ENCODE measurements at regions of chr3 and their contacts with region 1.

Region 1: DNA sequence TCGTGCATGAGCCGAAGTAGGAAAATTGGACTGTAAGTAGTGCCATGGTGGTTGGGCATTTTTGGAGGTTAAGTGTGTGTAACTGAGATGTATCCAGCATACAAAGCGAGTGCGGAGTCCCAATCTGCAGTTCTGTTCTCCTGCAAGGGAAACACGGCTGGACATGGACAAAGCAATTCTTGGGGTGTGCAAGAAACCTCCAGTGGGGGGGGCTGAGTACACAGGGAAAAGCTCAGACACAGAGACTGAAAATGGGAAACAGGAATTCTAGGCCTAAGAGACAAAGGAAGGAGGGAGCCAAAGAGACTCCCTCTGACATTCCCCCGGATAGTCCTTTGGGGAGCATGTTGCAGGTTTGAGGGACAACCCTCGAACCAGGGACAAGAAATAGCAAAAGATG is 83.2 kb upstream of the PLSCR4 start:
- DNase-seq: no peak
- H3K4me3 ChIP-seq: no peak overlapping the region
- H3K27ac ChIP-seq: no peak overlapping the region
- H3K4me1 ChIP-seq: no peaks in the 10 kb centered on the region
- H3K27me3 ChIP-seq: no peaks in the 10 kb centered on the region
- CTCF ChIP-seq: peak in 1 of 4 experiments; percentile 12
- POLR2A ChIP-seq: no peak

Region 2: DNA sequence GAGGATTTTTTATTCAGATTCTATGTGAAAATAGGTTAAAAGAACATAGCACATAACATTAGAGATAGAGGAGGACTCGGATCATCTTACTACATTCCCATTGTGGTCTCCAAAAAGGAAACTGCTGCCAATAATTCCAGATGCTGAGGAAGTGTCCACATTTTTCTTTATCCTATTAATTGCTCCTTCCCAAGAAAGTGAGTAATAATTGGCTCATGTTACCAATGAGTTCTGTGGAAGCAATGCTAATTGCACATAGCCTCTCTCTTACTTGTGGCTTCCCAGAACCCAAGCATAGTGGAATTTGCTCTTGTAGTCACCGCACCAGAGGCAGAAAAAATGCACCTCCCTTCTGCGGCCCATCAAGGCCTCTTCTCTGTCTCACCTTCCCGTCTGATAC is 381.6 kb before region 1 on chr3:
- intact Hi-C with region 1: no loop called
- DNase-seq: no peak
- H3K4me3 ChIP-seq: no peak overlapping the region
- H3K27ac ChIP-seq: no peak overlapping the region
- H3K4me1 ChIP-seq: no peaks in the 10 kb centered on the region
- H3K27me3 ChIP-seq: no peaks in the 10 kb centered on the region
- CTCF ChIP-seq: no peak
- POLR2A ChIP-seq: no peak

Region 3: GRCh38 chr3:146577662-146578061 is 243.5 kb after region 1 on chr3:
- intact Hi-C with region 1: loop called (anchors 5 kb)
- DNase-seq: peak; percentile 19
- H3K4me3 ChIP-seq: no peak overlapping the region
- H3K27ac ChIP-seq: no peak overlapping the region
- H3K4me1 ChIP-seq: no peaks in the 10 kb centered on the region
- H3K27me3 ChIP-seq: no peaks in the 10 kb centered on the region
- CTCF ChIP-seq: peak in 3 of 4 experiments; percentile 37 to 63 (median 57)
- POLR2A ChIP-seq: no peak